Cardiac septum (tissue), 1 donor: ENCODE measurements at regions of chr5 and their contacts with region 1.

Region 1: GRCh38 chr5:121630402-121630801 is 221.3 kb upstream of the FTMT start:
- DNase-seq: no peak

Region 2: DNA sequence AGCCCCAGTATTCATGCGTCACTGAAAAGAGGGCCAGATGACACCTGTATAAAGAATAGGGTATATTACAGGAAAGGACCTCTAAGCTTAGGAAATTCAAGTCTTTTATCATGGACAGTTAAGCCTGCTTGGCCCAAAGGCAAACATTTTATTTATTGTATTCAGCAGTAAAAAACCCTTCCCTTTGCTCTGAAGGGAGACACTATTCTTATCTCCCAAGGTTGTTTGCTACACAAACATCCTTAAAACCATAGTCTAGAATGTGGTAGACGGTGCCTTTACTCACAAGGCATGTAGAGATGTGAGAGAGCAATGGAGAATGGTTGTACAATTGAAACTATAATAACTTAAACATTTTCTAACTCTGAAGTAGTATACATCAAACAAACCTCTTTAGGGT is 255.2 kb after region 1 on chr5:
- intact Hi-C with region 1: loop called (anchors 10 kb)
- DNase-seq: no peak